ENCODE measurements at regions of chr11 and their contacts with region 1.

Region 1: DNA sequence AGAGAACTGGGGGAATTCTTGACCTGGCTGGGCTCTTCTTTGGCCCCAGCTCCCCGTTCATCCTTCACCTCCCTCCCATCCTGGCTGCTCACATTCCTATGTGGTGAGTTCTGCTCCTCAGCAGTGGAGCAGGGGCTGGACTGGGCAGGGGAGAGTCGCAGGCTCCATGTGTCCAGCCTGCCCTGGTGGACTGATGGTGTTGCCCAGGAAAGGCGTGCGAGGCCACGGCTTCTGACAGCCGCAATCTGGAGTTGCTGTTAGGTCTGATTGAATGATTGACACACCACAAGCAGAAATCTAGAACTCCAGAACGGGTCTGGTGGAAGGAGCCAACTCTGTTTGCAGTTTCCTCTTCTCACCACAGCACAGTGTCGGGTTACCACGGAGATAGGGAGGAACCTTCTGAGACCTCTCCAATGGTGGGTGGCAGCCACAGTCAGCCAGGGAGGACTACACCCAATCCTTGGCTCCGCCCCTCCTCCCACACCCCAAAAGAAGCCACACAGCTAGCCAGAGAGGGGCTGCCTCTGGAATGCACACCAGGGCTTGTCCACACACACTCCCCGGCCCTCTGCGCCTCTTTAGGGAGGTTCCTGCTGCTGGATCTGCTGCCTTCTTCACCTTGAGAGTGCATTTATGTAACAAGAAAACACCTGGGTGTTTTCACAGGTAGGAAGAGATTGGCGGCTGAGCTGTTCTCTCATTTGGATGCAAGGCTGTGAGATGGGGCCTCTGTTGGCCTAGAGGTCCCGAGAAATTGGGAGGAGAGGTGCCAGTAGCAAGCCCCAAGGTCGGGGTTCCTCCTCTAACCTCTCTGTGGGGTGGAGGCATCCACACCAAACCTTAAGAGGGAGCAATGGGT is 56.4 kb upstream of the CD44 start:
- DNase-seq: peak; percentile 89 to 96 (median 93)
- H3K4me3 ChIP-seq: peak overlapping the region; percentile 50 to 57
- H3K4me3 Mint-ChIP-seq: peak overlapping the region; percentile 78 to 90 (median 84)
- H3K27ac ChIP-seq: peak overlapping the region; percentile 97
- H3K27ac Mint-ChIP-seq: peak overlapping the region; percentile 94 to 99 (median 98)
- H3K4me1 ChIP-seq: peaks cover 85% of the 10 kb centered on the region
- H3K4me1 Mint-ChIP-seq: peaks cover 73 to 100% (median 87%) of the 10 kb centered on the region in 4 donors
- H3K27me3 ChIP-seq: no peaks in the 10 kb centered on the region
- H3K27me3 Mint-ChIP-seq: no peaks in the 10 kb centered on the region

Region 2: GRCh38 chr11:34214961-34215805 is 867.4 kb before region 1 on chr11:
- CTCF ChIA-PET with region 1: no interaction called
- POLR2A ChIA-PET with region 1: no interaction called
- intact Hi-C with region 1: no loop called
- DNase-seq: peak in 1 of 5 donors; percentile 50
- H3K4me3 ChIP-seq: no peak overlapping the region
- H3K4me3 Mint-ChIP-seq: no peak overlapping the region
- H3K27ac ChIP-seq: no peak overlapping the region
- H3K27ac Mint-ChIP-seq: peak overlapping the region in 1 of 7 donors; percentile 37
- H3K4me1 ChIP-seq: no peaks in the 10 kb centered on the region
- H3K4me1 Mint-ChIP-seq: peaks cover 0 to 3% (median 0%) of the 10 kb centered on the region in 4 donors
- H3K27me3 ChIP-seq: no peaks in the 10 kb centered on the region
- H3K27me3 Mint-ChIP-seq: no peaks in the 10 kb centered on the region

Region 3: GRCh38 chr11:34599406-34599901 is 483.1 kb before region 1 on chr11:
- CTCF ChIA-PET with region 1: no interaction called
- POLR2A ChIA-PET with region 1: no interaction called
- intact Hi-C with region 1: no loop called
- DNase-seq: no peak
- H3K4me3 ChIP-seq: no peak overlapping the region
- H3K4me3 Mint-ChIP-seq: peak overlapping the region in 3 of 8 donors; percentile 25 to 56 (median 45)
- H3K27ac ChIP-seq: no peak overlapping the region
- H3K27ac Mint-ChIP-seq: peak overlapping the region in 2 of 7 donors; percentile 3 to 30
- H3K4me1 ChIP-seq: peaks cover 13% of the 10 kb centered on the region
- H3K4me1 Mint-ChIP-seq: peaks cover 6 to 19% (median 11%) of the 10 kb centered on the region in 4 donors
- H3K27me3 ChIP-seq: no peaks in the 10 kb centered on the region
- H3K27me3 Mint-ChIP-seq: peaks cover 3 to 4% of the 10 kb centered on the region in 2 donors

Region 4: GRCh38 chr11:34916015-34916842 is 166.3 kb before region 1 on chr11 and contains the starts of genes APIP and PDHX:
- CTCF ChIA-PET with region 1: no interaction called
- POLR2A ChIA-PET with region 1: interaction called, 3 read pairs
- intact Hi-C with region 1: loop called (anchors 5 kb)
- DNase-seq: peak; percentile 83 to 95 (median 85)
- H3K4me3 ChIP-seq: peak within 1 kb of the TSS; percentile 93 to 95
- H3K4me3 Mint-ChIP-seq: peak within 1 kb of the TSS; percentile 90 to 100 (median 96)
- H3K27ac ChIP-seq: peak within 1 kb of the TSS; percentile 81
- H3K27ac Mint-ChIP-seq: peak within 1 kb of the TSS; percentile 95 to 99 (median 97)
- H3K4me1 ChIP-seq: peaks cover 29% of the 10 kb centered on the region
- H3K4me1 Mint-ChIP-seq: peaks cover 31 to 55% (median 40%) of the 10 kb centered on the region in 4 donors
- H3K27me3 ChIP-seq: no peaks in the 10 kb centered on the region
- H3K27me3 Mint-ChIP-seq: no peaks in the 10 kb centered on the region
- total RNA-seq, gene APIP: 17.7 to 18.4 TPM
- total RNA-seq, gene PDHX: 39.1 to 43.5 TPM

Region 5: DNA sequence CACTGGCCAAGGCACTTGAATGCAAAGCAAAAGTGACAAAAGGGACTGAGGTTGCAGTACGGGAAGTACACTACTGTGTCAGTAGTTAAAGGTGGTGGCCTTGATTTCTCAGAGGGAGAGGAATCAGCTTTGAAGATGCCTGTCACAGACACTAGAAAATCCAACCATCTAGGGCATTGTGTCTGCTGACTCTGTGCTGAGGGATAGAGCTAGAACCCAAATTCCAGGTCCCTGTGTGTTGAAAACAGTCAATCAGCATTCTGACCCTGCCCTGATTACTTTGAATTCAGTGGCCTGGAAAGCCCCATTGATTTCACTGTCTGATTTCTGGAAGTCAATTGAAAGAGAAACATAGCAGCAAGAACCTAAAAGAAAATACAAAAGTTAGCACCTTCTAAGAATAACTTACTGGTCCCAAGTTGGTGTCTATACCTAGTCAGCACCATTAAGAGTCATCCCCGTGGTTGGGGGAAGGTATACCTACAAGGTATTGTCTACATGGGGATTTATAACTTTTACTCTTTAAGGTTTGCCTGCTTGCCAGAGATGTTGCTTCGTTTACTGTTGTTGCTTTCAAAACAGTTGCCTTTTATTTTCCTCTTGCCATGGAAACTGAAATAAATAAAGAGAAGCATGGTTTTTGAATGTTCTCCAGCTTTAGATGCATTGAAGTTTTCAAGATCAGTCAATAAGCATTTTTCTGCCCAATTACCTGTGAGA is 68.9 kb before region 1 on chr11:
- CTCF ChIA-PET with region 1: no interaction called
- POLR2A ChIA-PET with region 1: interaction called, 9 read pairs
- intact Hi-C with region 1: loop called (anchors 2 kb)
- DNase-seq: peak; percentile 61 to 87 (median 75)
- H3K4me3 ChIP-seq: no peak overlapping the region
- H3K4me3 Mint-ChIP-seq: peak overlapping the region; percentile 11 to 87 (median 71)
- H3K27ac ChIP-seq: peak overlapping the region; percentile 70
- H3K27ac Mint-ChIP-seq: peak overlapping the region; percentile 93 to 100 (median 97)
- H3K4me1 ChIP-seq: peaks cover 26% of the 10 kb centered on the region
- H3K4me1 Mint-ChIP-seq: peaks cover 23 to 57% (median 37%) of the 10 kb centered on the region in 4 donors
- H3K27me3 ChIP-seq: no peaks in the 10 kb centered on the region
- H3K27me3 Mint-ChIP-seq: no peaks in the 10 kb centered on the region

Region 6: GRCh38 chr11:35058669-35059434 is 23.7 kb before region 1 on chr11:
- CTCF ChIA-PET with region 1: interaction called, 3 read pairs
- POLR2A ChIA-PET with region 1: interaction called, 55 read pairs
- intact Hi-C with region 1: loop called (anchors 2 kb)
- DNase-seq: no peak
- H3K4me3 ChIP-seq: no peak overlapping the region
- H3K4me3 Mint-ChIP-seq: peak overlapping the region in 7 of 8 donors; percentile 1 to 71 (median 14)
- H3K27ac ChIP-seq: no peak overlapping the region
- H3K27ac Mint-ChIP-seq: peak overlapping the region; percentile 19 to 90 (median 78)
- H3K4me1 ChIP-seq: peaks cover 40% of the 10 kb centered on the region
- H3K4me1 Mint-ChIP-seq: peaks cover 29 to 46% (median 40%) of the 10 kb centered on the region in 4 donors
- H3K27me3 ChIP-seq: no peaks in the 10 kb centered on the region
- H3K27me3 Mint-ChIP-seq: no peaks in the 10 kb centered on the region

Region 7: GRCh38 chr11:35066783-35067423 is 15.6 kb before region 1 on chr11:
- CTCF ChIA-PET with region 1: interaction called, 5 read pairs
- POLR2A ChIA-PET with region 1: interaction called, 55 read pairs
- intact Hi-C with region 1: loop called (anchors 1 kb)
- DNase-seq: peak; percentile 34 to 53 (median 42)
- H3K4me3 ChIP-seq: no peak overlapping the region
- H3K4me3 Mint-ChIP-seq: peak overlapping the region; percentile 15 to 78 (median 67)
- H3K27ac ChIP-seq: peak overlapping the region; percentile 4
- H3K27ac Mint-ChIP-seq: peak overlapping the region; percentile 63 to 92 (median 89)
- H3K4me1 ChIP-seq: peaks cover 43% of the 10 kb centered on the region
- H3K4me1 Mint-ChIP-seq: peaks cover 4 to 32% (median 27%) of the 10 kb centered on the region in 4 donors
- H3K27me3 ChIP-seq: no peaks in the 10 kb centered on the region
- H3K27me3 Mint-ChIP-seq: no peaks in the 10 kb centered on the region

Region 8: GRCh38 chr11:35126000-35126878 is 43.7 kb after region 1 on chr11:
- CTCF ChIA-PET with region 1: no interaction called
- POLR2A ChIA-PET with region 1: interaction called, 6 read pairs
- intact Hi-C with region 1: loop called (anchors 1 kb)
- DNase-seq: peak in 3 of 5 donors; percentile 41 to 70 (median 53)
- H3K4me3 ChIP-seq: peak overlapping the region; percentile 23 to 42
- H3K4me3 Mint-ChIP-seq: peak overlapping the region; percentile 54 to 80 (median 74)
- H3K27ac ChIP-seq: peak overlapping the region; percentile 40
- H3K27ac Mint-ChIP-seq: peak overlapping the region; percentile 80 to 92 (median 89)
- H3K4me1 ChIP-seq: peaks cover 55% of the 10 kb centered on the region
- H3K4me1 Mint-ChIP-seq: peaks cover 47 to 65% (median 60%) of the 10 kb centered on the region in 4 donors
- H3K27me3 ChIP-seq: no peaks in the 10 kb centered on the region
- H3K27me3 Mint-ChIP-seq: no peaks in the 10 kb centered on the region

Region 9: GRCh38 chr11:35182317-35182939 is 99.9 kb after region 1 on chr11:
- CTCF ChIA-PET with region 1: interaction called, 3 read pairs
- POLR2A ChIA-PET with region 1: interaction called, 10 read pairs
- intact Hi-C with region 1: no loop called
- DNase-seq: peak in 1 of 5 donors; percentile 30
- H3K4me3 ChIP-seq: no peak overlapping the region
- H3K4me3 Mint-ChIP-seq: peak overlapping the region in 6 of 8 donors; percentile 30 to 82 (median 48)
- H3K27ac ChIP-seq: peak overlapping the region; percentile 13
- H3K27ac Mint-ChIP-seq: peak overlapping the region; percentile 73 to 95 (median 91)
- H3K4me1 ChIP-seq: peaks cover 88% of the 10 kb centered on the region
- H3K4me1 Mint-ChIP-seq: peaks cover 65 to 87% (median 75%) of the 10 kb centered on the region in 4 donors
- H3K27me3 ChIP-seq: no peaks in the 10 kb centered on the region
- H3K27me3 Mint-ChIP-seq: no peaks in the 10 kb centered on the region

Region 10: GRCh38 chr11:35362521-35362990 is 280.0 kb after region 1 on chr11:
- CTCF ChIA-PET with region 1: no interaction called
- POLR2A ChIA-PET with region 1: no interaction called
- intact Hi-C with region 1: no loop called
- DNase-seq: no peak
- H3K4me3 ChIP-seq: no peak overlapping the region
- H3K4me3 Mint-ChIP-seq: no peak overlapping the region
- H3K27ac ChIP-seq: no peak overlapping the region
- H3K27ac Mint-ChIP-seq: peak overlapping the region in 1 of 7 donors; percentile 2
- H3K4me1 ChIP-seq: no peaks in the 10 kb centered on the region
- H3K4me1 Mint-ChIP-seq: peaks cover 0 to 5% (median 3%) of the 10 kb centered on the region in 4 donors
- H3K27me3 ChIP-seq: no peaks in the 10 kb centered on the region
- H3K27me3 Mint-ChIP-seq: peaks cover 4 to 7% of the 10 kb centered on the region in 2 donors

Measured in CD4-positive, alpha-beta memory T cell (primary cell).